IMR-90 (cell line): ENCODE measurements at regions of chr9 and their contacts with region 1.

Region 1: DNA sequence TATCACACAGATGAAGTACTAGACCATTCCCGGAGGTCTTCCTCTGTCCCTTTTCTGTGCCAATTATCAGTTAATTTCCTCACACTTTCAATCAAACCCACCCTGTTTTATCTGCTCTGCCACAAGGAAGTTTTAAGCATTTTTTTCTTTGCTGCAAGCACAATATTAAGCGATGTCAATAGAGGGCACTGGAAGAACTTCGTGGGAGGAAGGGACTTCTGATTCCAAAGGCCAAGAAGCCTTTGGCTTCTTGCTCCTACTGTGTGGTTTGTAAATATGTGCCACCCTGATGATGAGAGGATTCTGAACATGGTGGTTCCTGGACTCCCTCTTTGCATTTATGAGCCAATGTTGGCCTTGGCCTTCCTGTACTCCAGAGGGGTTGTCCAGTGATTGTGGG is 1712.5 kb upstream of the C9orf72 start:
- DNase-seq: no peak
- ATAC-seq: no peak
- H3K4me3 ChIP-seq: no peak overlapping the region
- H3K27ac ChIP-seq: no peak overlapping the region
- H3K4me1 ChIP-seq: no peaks in the 10 kb centered on the region
- H3K27me3 ChIP-seq: no peaks in the 10 kb centered on the region
- CTCF ChIP-seq: no peak
- POLR2A ChIP-seq: no peak
- RAD21 ChIP-seq: no peak

Region 2: GRCh38 chr9:27673641-27674040 is 1612.2 kb before region 1 on chr9:
- CTCF ChIA-PET with region 1: no interaction called
- POLR2A ChIA-PET with region 1: interaction called, 11 read pairs
- dilution Hi-C with region 1: no loop called
- in situ Hi-C with region 1: no loop called
- intact Hi-C with region 1: no loop called
- DNase-seq: no peak
- ATAC-seq: no peak
- H3K4me3 ChIP-seq: no peak overlapping the region
- H3K27ac ChIP-seq: no peak overlapping the region
- H3K4me1 ChIP-seq: no peaks in the 10 kb centered on the region
- H3K27me3 ChIP-seq: no peaks in the 10 kb centered on the region
- CTCF ChIP-seq: no peak
- POLR2A ChIP-seq: no peak
- RAD21 ChIP-seq: no peak